ENCODE measurements at regions of chr12 and their contacts with region 1.

Region 1: DNA sequence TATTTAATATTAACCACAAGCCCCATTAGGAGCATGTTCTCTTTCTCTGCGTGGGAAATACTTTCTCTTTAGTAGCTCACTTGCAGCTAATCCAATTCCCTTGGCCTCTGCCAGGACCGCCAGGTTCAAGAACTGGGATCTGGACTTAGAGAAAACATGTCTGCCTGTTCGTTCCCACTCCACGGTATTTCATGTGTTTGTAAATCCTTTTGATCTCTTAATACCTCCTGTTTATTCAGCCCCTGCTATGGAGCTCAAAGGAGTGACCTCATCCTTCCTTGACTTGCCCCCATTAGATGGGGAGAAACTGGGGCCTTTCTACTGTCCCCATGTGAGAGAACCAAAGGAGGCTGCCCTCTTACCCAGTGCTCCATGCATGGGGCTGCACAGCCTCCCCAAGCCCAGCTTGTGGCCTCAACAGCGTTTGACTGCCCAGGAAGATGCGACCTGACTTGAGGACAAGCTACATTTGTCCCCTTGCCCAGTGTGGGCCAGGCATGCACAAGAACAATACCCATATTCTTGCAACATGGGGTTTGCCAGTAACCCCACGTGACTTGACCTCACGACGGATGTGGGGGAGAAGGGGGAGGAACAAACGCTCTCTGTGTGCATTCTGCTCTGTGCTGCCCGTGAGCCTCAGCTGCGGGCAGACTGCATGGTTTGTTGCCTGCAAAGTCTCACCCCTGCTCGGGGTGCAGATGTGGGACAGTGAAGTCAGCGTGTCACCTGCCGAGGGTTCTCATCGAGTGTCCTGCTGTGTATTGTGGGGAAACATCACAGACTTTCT is 30.3 kb downstream of the CD9 start:
- DNase-seq: peak; percentile 94
- H3K4me3 ChIP-seq: peak overlapping the region in 2 of 4 donors; percentile 3 to 10
- H3K27ac ChIP-seq: peak overlapping the region; percentile 95 to 100 (median 98)
- H3K4me1 ChIP-seq: peaks cover 0 to 100% (median 98%) of the 10 kb centered on the region in 4 donors
- H3K27me3 ChIP-seq: no peaks in the 10 kb centered on the region
- CTCF ChIP-seq: no peak
- EP300 ChIP-seq: peak in 3 of 4 donors; percentile 47 to 90 (median 76)
- POLR2A ChIP-seq: no peak

Region 2: GRCh38 chr12:5745265-5745888 is 485.1 kb before region 1 on chr12:
- intact Hi-C with region 1: no loop called
- DNase-seq: no peak
- H3K4me3 ChIP-seq: no peak overlapping the region
- H3K27ac ChIP-seq: no peak overlapping the region
- H3K4me1 ChIP-seq: no peaks in the 10 kb centered on the region
- H3K27me3 ChIP-seq: no peaks in the 10 kb centered on the region
- CTCF ChIP-seq: peak in 3 of 4 experiments; percentile 29 to 51 (median 40)
- EP300 ChIP-seq: no peak
- POLR2A ChIP-seq: no peak

Region 3: GRCh38 chr12:6084261-6084968 is 146.1 kb before region 1 on chr12:
- intact Hi-C with region 1: loop called (anchors 5 kb)
- DNase-seq: peak; percentile 83
- H3K4me3 ChIP-seq: no peak overlapping the region
- H3K27ac ChIP-seq: peak overlapping the region; percentile 59 to 83 (median 75)
- H3K4me1 ChIP-seq: peaks cover 0 to 48% (median 36%) of the 10 kb centered on the region in 4 donors
- H3K27me3 ChIP-seq: no peaks in the 10 kb centered on the region
- CTCF ChIP-seq: no peak
- EP300 ChIP-seq: peak in 2 of 4 donors; percentile 53 to 73
- POLR2A ChIP-seq: no peak

Region 4: DNA sequence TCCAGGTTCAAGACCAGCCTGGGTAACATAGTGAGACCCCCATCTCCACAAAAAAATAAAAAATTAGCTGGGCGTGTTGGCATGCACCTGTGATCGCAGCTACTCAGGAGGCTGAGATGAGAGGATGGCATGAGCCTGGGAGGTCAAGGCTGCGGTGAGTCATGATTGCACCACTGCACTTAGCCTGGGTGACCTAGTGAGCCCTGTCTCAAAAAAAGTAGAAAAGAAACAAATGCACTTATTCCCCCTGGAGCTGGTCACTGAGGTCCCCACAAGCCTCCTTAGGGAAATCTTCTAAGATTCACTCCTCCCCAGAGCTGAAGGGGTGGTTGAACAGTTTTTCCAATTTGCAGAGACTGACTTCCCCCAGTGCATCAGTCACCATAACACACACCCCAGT is 28.7 kb before region 1 on chr12:
- intact Hi-C with region 1: loop called (anchors 1 kb)
- DNase-seq: no peak
- H3K4me3 ChIP-seq: peak overlapping the region; percentile 74 to 100 (median 92)
- H3K27ac ChIP-seq: peak overlapping the region; percentile 95 to 100 (median 98)
- H3K4me1 ChIP-seq: peaks cover 0 to 82% (median 69%) of the 10 kb centered on the region in 4 donors
- H3K27me3 ChIP-seq: no peaks in the 10 kb centered on the region
- CTCF ChIP-seq: no peak
- EP300 ChIP-seq: no peak
- POLR2A ChIP-seq: no peak

Region 5: GRCh38 chr12:6278439-6279255 is 48.1 kb after region 1 on chr12:
- intact Hi-C with region 1: loop called (anchors 2 kb)
- DNase-seq: peak; percentile 92
- H3K4me3 ChIP-seq: peak overlapping the region; percentile 28 to 62 (median 58)
- H3K27ac ChIP-seq: peak overlapping the region; percentile 84 to 93 (median 91)
- H3K4me1 ChIP-seq: peaks cover 0 to 35% (median 29%) of the 10 kb centered on the region in 4 donors
- H3K27me3 ChIP-seq: no peaks in the 10 kb centered on the region
- CTCF ChIP-seq: peak in 2 of 4 experiments; percentile 47 to 97
- EP300 ChIP-seq: no peak
- POLR2A ChIP-seq: peak in 1 of 2 donors; percentile 27